BJ (cell line): ENCODE measurements at regions of chr9 and their contacts with region 1.

Region 1: DNA sequence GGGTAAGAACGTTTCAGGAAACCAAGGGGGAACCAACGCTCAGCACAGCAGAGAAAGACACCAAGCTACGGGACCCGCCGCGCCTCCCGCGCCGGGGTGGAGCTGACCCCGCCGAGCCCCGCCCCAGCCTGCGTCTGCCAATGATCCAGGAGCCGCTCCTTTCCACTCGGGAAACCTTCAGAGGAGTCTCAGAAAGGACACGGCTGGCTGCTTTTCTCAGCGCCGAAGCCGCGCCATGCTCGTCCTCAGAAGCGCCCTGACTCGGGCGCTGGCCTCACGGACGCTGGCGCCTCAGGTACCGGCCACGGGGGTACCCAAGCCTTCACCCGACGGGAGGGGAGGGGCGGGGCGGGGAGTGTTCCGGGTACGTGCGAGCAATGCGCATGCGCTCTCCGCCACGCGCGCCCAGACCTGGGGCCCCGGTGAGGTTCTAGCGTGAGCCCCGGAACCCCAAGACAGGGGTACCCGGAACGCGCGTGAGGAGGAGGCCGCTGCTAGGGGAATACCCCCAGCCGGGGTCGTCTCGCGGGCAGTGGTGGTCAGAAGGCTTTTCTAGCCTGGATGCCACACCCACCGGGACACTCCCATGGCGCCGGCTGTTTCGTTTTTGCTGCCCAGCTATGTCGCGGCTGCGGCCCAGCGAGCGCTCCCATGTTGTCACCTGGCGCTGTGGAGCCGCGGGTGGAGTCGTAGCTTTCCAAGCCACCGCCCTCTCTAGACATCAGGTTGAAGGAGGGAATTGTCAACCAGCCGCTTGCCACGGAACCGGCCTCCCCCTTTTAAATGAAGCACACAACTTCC is at the start of gene NIPSNAP3A:
- DNase-seq: no peak
- H3K4me3 ChIP-seq: peak within 1 kb of the TSS; percentile 92
- H3K27me3 ChIP-seq: no peaks in the 10 kb centered on the region
- CTCF ChIP-seq: no peak
- polyA plus RNA-seq, gene NIPSNAP3A: 40.6 and 62.8 TPM in 2 replicates

Region 2: DNA sequence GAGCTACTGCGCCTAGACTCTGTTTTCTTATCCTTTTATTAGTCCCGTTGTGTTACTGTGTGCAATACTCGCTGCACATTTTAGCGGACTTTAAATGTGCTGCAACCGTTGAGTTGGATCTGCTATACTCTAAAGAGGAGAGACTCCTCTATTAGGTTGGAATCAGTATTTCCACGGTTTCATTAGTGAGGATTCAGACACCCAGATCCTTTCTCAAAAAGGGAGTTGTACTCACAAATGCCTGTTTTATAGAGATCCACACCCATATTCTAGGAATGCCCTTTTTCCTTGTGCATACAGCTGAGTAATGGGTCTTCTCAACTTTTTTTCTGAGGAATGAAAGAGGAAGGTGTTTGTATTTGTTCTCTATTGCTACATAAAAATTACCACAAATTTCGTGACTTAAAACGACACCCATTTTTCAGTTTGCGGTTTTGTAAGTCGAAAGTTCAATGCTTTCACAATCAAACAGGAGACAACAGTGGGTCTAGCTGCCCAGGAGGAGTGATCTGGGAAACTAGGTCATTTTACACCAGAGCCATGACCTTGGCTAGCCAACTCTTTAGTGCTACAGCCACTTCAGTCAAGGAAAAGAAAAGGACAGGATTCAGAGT is 443.9 kb after region 1 on chr9:
- CTCF ChIA-PET with region 1: no interaction called
- POLR2A ChIA-PET with region 1: interaction called, 21 read pairs
- DNase-seq: no peak
- H3K4me3 ChIP-seq: no peak overlapping the region
- H3K27me3 ChIP-seq: no peaks in the 10 kb centered on the region
- CTCF ChIP-seq: no peak